ENCODE measurements at regions of chr20 and their contacts with region 1.

Region 1: GRCh38 chr20:45011108-45011526 is 44.8 kb downstream of the STK4 start:
- DNase-seq: peak; percentile 57
- ATAC-seq: peak; percentile 77
- H3K4me3 Mint-ChIP-seq: no peak overlapping the region
- H3K27ac Mint-ChIP-seq: no peak overlapping the region
- H3K4me1 Mint-ChIP-seq: peaks cover 16% of the 10 kb centered on the region
- H3K27me3 Mint-ChIP-seq: no peaks in the 10 kb centered on the region
- CTCF ChIP-seq: peak; percentile 44

Region 2: DNA sequence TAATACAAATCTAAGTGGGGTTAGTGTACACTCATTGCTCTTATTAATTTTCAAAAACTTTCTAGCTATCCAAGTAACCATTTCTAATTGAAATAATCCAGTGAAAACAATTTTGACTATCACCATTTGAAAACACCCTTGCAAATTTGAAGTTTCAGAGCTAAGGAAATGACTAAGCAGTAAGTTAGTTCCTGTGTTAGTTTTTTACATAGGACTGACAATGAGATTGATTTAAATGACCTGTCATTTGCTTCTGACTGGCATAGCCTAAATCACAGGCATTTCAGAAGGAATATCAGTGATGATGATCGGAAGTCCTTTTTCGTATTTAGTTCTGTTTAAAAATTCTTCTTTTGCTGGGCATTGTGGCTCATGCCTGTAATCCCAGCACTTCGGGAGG is 17.8 kb before region 1 on chr20:
- CTCF ChIA-PET with region 1: interaction called, 11 read pairs
- POLR2A ChIA-PET with region 1: no interaction called
- DNase-seq: no peak
- ATAC-seq: no peak
- H3K4me3 Mint-ChIP-seq: no peak overlapping the region
- H3K27ac Mint-ChIP-seq: peak overlapping the region; percentile 79
- H3K4me1 Mint-ChIP-seq: peaks cover 17% of the 10 kb centered on the region
- H3K27me3 Mint-ChIP-seq: no peaks in the 10 kb centered on the region
- CTCF ChIP-seq: no peak

Region 3: GRCh38 chr20:45111799-45112471 is 100.8 kb after region 1 on chr20:
- CTCF ChIA-PET with region 1: interaction called, 16 read pairs
- POLR2A ChIA-PET with region 1: no interaction called
- DNase-seq: peak; percentile 52
- ATAC-seq: peak; percentile 54
- H3K4me3 Mint-ChIP-seq: no peak overlapping the region
- H3K27ac Mint-ChIP-seq: no peak overlapping the region
- H3K4me1 Mint-ChIP-seq: peaks cover 8% of the 10 kb centered on the region; the same call in 1 of the 2 replicates
- H3K27me3 Mint-ChIP-seq: peaks cover 4% of the 10 kb centered on the region; the same call in 1 of the 2 replicates
- CTCF ChIP-seq: peak; percentile 71